ENCODE measurements at regions of chr15 and their contacts with region 1.

Region 1: DNA sequence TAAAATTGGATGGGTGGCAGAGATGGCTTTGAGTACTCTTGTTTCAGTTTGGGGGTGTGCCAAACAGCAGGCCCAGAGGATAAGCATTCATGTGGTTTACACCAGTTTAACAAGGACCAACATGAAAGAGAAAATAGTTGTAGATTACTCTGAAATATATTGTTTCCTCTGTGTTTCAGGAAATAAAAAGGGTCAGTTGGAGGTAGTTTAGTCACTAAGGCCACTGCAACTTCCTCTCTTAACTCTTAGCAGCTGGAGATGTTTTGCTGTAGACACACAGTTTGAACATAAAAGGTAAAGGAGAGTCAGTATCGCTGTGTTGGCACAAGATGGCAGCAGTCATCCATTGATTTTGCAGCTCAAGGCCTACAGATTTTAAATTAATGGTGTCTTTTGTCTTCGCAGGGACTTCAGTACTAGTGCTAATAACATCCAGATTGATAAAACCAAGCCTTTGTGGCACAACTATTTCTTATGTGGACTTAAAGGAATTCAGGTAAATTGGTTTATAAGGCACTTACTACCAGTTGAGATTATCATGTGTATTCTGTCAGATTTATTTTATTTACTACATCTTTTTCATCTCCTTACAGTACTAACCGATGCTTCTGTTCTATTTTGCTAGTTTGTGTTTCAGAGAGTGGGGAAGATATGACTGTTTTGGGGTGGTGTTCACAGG is 65.5 kb downstream of the GALK2 start:
- DNase-seq: peak; percentile 86
- H3K4me3 Mint-ChIP-seq: no peak overlapping the region
- H3K27ac Mint-ChIP-seq: peak overlapping the region; percentile 11
- H3K4me1 Mint-ChIP-seq: peaks cover 15% of the 10 kb centered on the region
- H3K27me3 Mint-ChIP-seq: no peaks in the 10 kb centered on the region

Region 2: GRCh38 chr15:49421991-49422390 is 186.4 kb after region 1 on chr15:
- intact Hi-C with region 1: loop called (anchors 1 kb)
- DNase-seq: peak; percentile 73
- H3K4me3 Mint-ChIP-seq: peak overlapping the region; percentile 2
- H3K27ac Mint-ChIP-seq: peak overlapping the region; percentile 23
- H3K4me1 Mint-ChIP-seq: peaks cover 4% of the 10 kb centered on the region
- H3K27me3 Mint-ChIP-seq: peaks cover 8% of the 10 kb centered on the region

Region 3: GRCh38 chr15:49439678-49440395 is 204.3 kb after region 1 on chr15:
- intact Hi-C with region 1: no loop called
- DNase-seq: no peak
- H3K4me3 Mint-ChIP-seq: no peak overlapping the region
- H3K27ac Mint-ChIP-seq: no peak overlapping the region
- H3K4me1 Mint-ChIP-seq: peaks cover 4% of the 10 kb centered on the region
- H3K27me3 Mint-ChIP-seq: peaks cover 14% of the 10 kb centered on the region

Region 4: DNA sequence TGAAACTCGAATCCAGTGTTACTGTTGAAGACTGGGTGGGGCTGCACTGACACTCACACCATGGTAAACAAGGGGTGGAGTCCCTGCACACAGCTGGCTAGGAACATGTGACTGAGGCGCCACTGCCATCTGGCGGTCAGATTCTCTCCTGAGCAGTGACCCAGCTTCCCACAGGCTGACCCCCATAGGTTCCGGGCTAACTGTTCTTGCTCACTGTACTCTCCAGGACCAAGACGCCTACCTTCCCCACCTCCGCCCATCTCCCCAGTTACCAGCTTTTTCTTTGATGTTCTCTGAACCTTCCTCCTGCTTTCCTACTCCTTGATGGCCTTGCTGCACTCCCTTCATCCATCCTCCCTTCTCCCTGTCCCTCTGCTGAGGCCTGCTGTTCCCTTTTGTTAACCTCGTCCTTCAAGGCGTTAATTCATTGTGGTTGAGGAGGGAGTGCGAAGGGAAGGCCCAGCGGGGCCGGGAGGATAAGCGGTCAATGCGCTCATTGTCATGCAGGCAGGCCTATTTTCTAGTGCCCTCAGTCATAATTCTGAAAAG is 768.3 kb after region 1 on chr15:
- intact Hi-C with region 1: loop called (anchors 1 kb)
- DNase-seq: peak; percentile 91
- H3K4me3 Mint-ChIP-seq: no peak overlapping the region
- H3K27ac Mint-ChIP-seq: peak overlapping the region; percentile 59
- H3K4me1 Mint-ChIP-seq: peaks cover 9% of the 10 kb centered on the region
- H3K27me3 Mint-ChIP-seq: no peaks in the 10 kb centered on the region

Region 5: DNA sequence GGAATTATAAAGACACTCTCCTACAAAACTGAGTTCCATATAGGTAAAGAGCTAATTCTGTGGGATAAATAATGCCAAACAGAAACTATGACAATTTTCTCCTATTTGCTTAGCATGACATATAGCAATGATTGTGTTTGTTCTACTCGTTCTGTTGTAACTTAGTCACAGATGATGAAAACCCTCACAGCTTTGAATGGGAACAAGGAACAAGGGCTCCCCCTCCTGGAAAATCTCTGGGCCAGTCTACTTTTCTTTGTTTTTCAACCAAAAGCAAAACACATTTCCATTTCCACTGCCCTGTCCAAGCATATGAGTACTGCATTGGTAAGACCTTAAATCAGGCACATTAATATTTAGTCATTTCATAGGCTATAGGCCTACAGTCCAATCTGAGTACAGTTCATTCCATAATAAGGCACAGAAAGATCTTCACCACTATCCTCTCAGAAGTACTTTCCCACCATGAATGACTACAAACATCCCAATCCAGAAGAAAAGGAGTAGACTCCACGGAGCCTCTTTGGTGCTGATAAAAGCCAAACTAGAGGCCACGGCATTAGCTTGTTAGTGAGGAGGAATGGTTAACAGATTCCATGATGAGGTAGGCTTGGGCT is 816.3 kb after region 1 on chr15:
- intact Hi-C with region 1: loop called (anchors 5 kb)
- DNase-seq: peak; percentile 76
- H3K4me3 Mint-ChIP-seq: no peak overlapping the region
- H3K27ac Mint-ChIP-seq: peak overlapping the region; percentile 54
- H3K4me1 Mint-ChIP-seq: peaks cover 39% of the 10 kb centered on the region
- H3K27me3 Mint-ChIP-seq: no peaks in the 10 kb centered on the region

Region 6: GRCh38 chr15:50247819-50248655 is 1012.5 kb after region 1 on chr15:
- intact Hi-C with region 1: no loop called
- DNase-seq: peak; percentile 91
- H3K4me3 Mint-ChIP-seq: peak overlapping the region; percentile 81
- H3K27ac Mint-ChIP-seq: peak overlapping the region; percentile 99
- H3K4me1 Mint-ChIP-seq: peaks cover 53% of the 10 kb centered on the region
- H3K27me3 Mint-ChIP-seq: no peaks in the 10 kb centered on the region